CD8-positive, alpha-beta T cell (primary cell): ENCODE measurements at regions of chr2 and their contacts with region 1.

Region 1: DNA sequence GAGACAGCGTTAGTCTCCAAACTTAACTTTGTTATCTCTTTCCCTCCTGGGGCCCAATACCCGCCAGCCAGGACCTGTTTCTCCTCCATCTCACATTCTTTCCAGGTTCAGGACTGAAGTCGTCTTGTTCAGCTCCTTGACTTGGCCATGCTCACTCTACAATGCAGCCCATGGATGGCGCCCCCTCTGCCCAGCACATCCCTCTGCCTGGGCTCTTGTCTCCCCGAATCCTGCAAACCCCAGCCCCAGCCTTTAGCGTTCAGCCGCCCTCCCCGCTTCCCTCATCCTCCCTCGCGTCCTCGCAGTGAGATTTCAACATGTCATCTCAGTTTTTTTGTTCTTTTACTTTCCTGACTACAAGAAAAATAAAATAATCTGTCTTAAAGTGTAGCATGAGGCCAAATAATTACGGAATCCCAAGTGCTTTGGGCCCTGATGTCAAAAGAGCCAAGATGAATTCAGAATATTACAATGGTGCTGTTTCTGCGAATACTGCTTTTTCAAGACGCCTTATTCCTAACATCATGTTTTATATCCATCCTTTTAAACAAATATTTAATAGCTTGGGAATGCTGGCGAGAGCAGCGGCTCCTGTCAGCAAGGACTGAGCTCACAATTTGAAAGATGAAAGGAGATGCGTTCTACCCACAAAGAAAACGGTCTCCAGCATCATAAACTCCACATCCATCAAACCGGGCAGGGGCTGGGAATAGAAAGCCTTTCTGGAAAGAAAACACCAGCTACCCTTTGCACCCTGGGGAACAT is 1.0 kb downstream of the FAM178B start:
- DNase-seq: no peak
- ATAC-seq: no peak
- H3K4me3 ChIP-seq: no peak overlapping the region
- H3K4me3 Mint-ChIP-seq: no peak overlapping the region
- H3K27ac ChIP-seq: no peak overlapping the region
- H3K27ac Mint-ChIP-seq: no peak overlapping the region
- H3K4me1 ChIP-seq: no peaks in the 10 kb centered on the region
- H3K4me1 Mint-ChIP-seq: no peaks in the 10 kb centered on the region
- H3K27me3 ChIP-seq: peaks cover 0 to 3% of the 10 kb centered on the region in 2 experiments
- H3K27me3 Mint-ChIP-seq: no peaks in the 10 kb centered on the region
- CTCF ChIP-seq: no peak

Region 2: DNA sequence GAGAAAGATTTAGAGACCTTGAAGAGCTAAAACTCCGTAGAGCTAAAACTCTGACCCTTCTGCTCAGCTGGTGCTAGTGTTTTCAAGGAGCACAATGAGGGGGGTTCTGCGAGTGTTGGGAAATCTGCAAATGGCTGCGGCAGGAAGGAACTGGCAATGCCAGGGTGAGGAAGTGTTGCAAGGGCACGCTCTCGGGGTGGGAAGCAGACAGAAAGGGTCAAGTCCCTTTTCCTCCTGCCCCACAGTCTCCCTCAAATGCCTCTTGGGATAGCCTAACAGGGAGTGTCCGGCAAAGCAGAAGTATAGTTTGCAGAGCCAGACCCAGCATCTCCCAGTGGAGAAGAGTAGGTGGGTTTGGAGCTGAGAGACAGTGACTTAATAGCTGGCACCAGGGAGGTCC is 589.3 kb before region 1 on chr2:
- CTCF ChIA-PET with region 1: no interaction called
- POLR2A ChIA-PET with region 1: no interaction called
- intact Hi-C with region 1: no loop called
- DNase-seq: no peak
- ATAC-seq: no peak
- H3K4me3 ChIP-seq: no peak overlapping the region
- H3K4me3 Mint-ChIP-seq: no peak overlapping the region
- H3K27ac ChIP-seq: no peak overlapping the region
- H3K27ac Mint-ChIP-seq: no peak overlapping the region
- H3K4me1 ChIP-seq: no peaks in the 10 kb centered on the region
- H3K4me1 Mint-ChIP-seq: peaks cover 6% of the 10 kb centered on the region
- H3K27me3 ChIP-seq: no peaks in the 10 kb centered on the region
- H3K27me3 Mint-ChIP-seq: peaks cover 6% of the 10 kb centered on the region
- CTCF ChIP-seq: no peak

Region 3: GRCh38 chr2:96656540-96656939 is 328.8 kb before region 1 on chr2:
- CTCF ChIA-PET with region 1: no interaction called
- POLR2A ChIA-PET with region 1: no interaction called
- intact Hi-C with region 1: no loop called
- DNase-seq: no peak
- ATAC-seq: no peak
- H3K4me3 ChIP-seq: no peak overlapping the region
- H3K4me3 Mint-ChIP-seq: no peak overlapping the region
- H3K27ac ChIP-seq: no peak overlapping the region
- H3K27ac Mint-ChIP-seq: no peak overlapping the region
- H3K4me1 ChIP-seq: no peaks in the 10 kb centered on the region
- H3K4me1 Mint-ChIP-seq: no peaks in the 10 kb centered on the region
- H3K27me3 ChIP-seq: no peaks in the 10 kb centered on the region
- H3K27me3 Mint-ChIP-seq: no peaks in the 10 kb centered on the region
- CTCF ChIP-seq: no peak

Region 4: GRCh38 chr2:96756788-96757479 is 228.4 kb before region 1 on chr2:
- CTCF ChIA-PET with region 1: no interaction called
- POLR2A ChIA-PET with region 1: no interaction called
- intact Hi-C with region 1: no loop called
- DNase-seq: no peak
- ATAC-seq: no peak
- H3K4me3 ChIP-seq: no peak overlapping the region
- H3K4me3 Mint-ChIP-seq: no peak overlapping the region
- H3K27ac ChIP-seq: no peak overlapping the region
- H3K27ac Mint-ChIP-seq: no peak overlapping the region
- H3K4me1 ChIP-seq: peaks cover 24% of the 10 kb centered on the region
- H3K4me1 Mint-ChIP-seq: peaks cover 26% of the 10 kb centered on the region
- H3K27me3 ChIP-seq: no peaks in the 10 kb centered on the region
- H3K27me3 Mint-ChIP-seq: no peaks in the 10 kb centered on the region
- CTCF ChIP-seq: no peak

Region 5: GRCh38 chr2:96881349-96882195 is 103.8 kb before region 1 on chr2:
- CTCF ChIA-PET with region 1: no interaction called
- POLR2A ChIA-PET with region 1: no interaction called
- intact Hi-C with region 1: loop called in 1 of 2 experiments (anchors 1 kb)
- DNase-seq: no peak
- ATAC-seq: no peak
- H3K4me3 ChIP-seq: no peak overlapping the region
- H3K4me3 Mint-ChIP-seq: no peak overlapping the region
- H3K27ac ChIP-seq: no peak overlapping the region
- H3K27ac Mint-ChIP-seq: no peak overlapping the region
- H3K4me1 ChIP-seq: no peaks in the 10 kb centered on the region
- H3K4me1 Mint-ChIP-seq: no peaks in the 10 kb centered on the region
- H3K27me3 ChIP-seq: no peaks in the 10 kb centered on the region
- H3K27me3 Mint-ChIP-seq: no peaks in the 10 kb centered on the region
- CTCF ChIP-seq: no peak